GM10248 (cell line): ENCODE measurements at regions of chr1 and their contacts with region 1.

Region 1: DNA sequence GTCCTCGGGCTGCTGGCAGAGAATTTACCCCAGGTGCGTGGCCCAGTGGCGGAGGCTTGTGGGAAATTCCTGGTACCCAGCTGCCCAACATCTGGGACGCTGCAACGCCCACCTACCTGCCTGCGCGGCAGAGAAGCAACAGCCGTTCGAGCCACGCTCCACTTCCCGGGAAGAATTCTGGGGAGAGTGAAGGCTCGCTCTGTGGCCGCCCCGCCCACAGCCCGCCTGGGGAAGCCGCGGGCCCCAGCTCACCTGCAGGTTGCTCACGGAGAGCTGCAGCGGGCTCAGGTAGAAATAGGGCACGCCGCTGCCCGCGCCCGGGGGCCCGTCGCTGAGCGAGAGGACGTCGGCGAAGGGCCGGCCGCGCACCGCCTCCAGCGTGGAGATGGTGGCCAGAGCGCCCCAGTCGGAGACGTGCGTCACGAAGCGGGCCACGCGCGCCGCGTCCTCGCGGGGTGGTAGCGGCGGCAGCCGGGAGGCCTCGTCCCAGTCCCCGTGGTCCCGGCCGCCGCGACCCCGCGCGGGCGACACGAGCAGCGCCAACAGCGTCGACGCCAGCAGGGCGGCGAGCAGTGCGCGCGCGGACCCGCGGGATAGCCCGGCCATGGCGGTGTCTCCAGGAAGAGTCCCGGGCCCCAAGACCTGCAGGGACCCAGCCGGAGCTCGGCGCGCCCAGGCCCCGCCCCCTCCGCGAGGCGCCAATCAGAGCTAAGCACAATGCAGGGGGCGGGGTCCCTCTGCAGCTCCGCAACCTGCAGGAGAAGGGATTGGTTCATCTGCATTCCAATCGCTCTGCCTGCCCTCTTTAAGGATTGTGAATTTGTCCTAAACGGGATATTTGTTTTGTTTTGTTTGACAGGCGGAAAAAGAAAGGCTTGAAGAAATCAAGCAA is at the start of gene CREG1:
- DNase-seq: peak; percentile 95
- CTCF ChIP-seq: no peak

Region 2: GRCh38 chr1:167524651-167525050 is 28.7 kb before region 1 on chr1:
- CTCF ChIA-PET with region 1: no interaction called
- POLR2A ChIA-PET with region 1: no interaction called
- DNase-seq: no peak
- CTCF ChIP-seq: no peak

Region 3: DNA sequence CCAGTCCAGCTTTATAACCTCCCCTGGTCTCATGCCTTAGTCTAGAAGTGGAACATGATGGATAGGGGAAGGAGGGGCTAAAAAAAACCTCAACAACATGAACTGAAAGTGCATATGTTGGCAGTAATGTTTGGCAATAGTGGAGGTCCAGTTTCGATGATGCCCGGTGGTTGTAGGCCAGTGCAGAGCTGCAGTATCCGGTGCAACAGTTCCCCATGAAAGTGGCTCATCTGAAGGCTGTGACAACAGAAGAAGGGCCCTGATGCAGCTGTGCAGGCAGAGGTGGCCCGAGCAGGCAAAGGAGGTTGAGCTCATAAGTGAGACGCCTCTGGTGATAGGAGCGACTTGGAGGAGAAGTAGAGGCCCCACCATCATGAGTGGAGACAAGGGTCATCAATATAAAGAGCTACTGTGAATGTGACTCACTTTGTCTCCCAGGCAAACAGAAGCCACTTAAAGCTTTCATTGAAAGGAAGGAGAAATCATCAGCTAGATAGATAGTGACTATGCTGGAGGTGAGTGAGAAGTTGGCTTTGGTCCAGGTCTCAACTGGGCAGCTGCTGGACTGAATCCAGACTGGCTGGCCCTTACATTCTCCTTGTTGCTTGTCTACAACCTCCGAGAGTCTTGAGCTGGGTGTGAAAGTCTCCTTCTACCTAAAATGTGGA is 10.3 kb after region 1 on chr1:
- CTCF ChIA-PET with region 1: interaction called, 80 read pairs
- POLR2A ChIA-PET with region 1: no interaction called
- DNase-seq: no peak
- CTCF ChIP-seq: no peak

Region 4: GRCh38 chr1:167573026-167573425 is 19.6 kb after region 1 on chr1:
- CTCF ChIA-PET with region 1: interaction called, 80 read pairs
- POLR2A ChIA-PET with region 1: no interaction called
- DNase-seq: no peak
- CTCF ChIP-seq: no peak